ENCODE measurements at regions of chr5 and their contacts with region 1.

Region 1: DNA sequence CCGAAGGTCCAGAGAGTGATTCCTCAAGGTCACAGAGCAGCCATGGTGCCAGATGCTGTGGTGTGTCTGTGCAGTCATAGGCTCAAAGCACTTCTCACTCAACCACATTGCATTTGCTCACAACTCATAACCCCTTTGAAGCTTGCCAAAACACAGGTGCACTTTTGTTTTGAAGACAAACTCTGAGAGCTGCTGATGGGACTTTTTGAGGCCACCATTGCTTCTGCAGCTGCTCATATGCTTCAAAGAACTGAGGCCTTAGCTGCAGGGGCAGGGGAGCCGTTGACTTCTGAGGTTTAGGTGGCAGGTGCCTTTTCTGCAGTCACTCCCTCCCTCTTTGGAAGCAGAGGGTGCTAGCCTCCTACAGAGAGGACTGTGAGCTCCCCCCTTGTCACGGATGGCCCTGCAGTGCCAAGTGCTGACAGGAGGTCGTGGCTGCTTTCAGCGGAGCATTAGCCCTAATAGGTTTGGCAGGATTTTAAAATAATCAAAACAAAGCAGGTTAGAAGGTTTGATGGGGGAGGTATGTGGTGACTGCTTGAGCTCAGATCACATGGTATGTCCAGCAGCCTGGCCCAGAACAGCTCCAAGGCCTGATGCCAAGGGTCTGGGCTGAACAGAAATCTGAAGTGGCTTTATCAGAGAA is 232.1 kb downstream of the MAN2A1 start:
- DNase-seq: peak; percentile 38 to 91 (median 68)
- ATAC-seq: peak; percentile 89
- H3K4me3 ChIP-seq: peak overlapping the region; percentile 13
- H3K4me3 Mint-ChIP-seq: peak overlapping the region; percentile 79
- H3K27ac ChIP-seq: peak overlapping the region; percentile 60 to 73
- H3K27ac Mint-ChIP-seq: peak overlapping the region; percentile 94
- H3K4me1 ChIP-seq: peaks cover 36% of the 10 kb centered on the region
- H3K4me1 Mint-ChIP-seq: peaks cover 66% of the 10 kb centered on the region
- H3K27me3 ChIP-seq: no peaks in the 10 kb centered on the region
- H3K27me3 Mint-ChIP-seq: no peaks in the 10 kb centered on the region
- CTCF ChIP-seq: no peak

Region 2: GRCh38 chr5:109823597-109823996 is 98.3 kb before region 1 on chr5:
- CTCF ChIA-PET with region 1: no interaction called
- POLR2A ChIA-PET with region 1: interaction called, 10 read pairs
- intact Hi-C with region 1: no loop called
- DNase-seq: no peak
- ATAC-seq: no peak
- H3K4me3 ChIP-seq: no peak overlapping the region
- H3K4me3 Mint-ChIP-seq: no peak overlapping the region
- H3K27ac ChIP-seq: no peak overlapping the region
- H3K27ac Mint-ChIP-seq: no peak overlapping the region
- H3K4me1 ChIP-seq: no peaks in the 10 kb centered on the region
- H3K4me1 Mint-ChIP-seq: peaks cover 12% of the 10 kb centered on the region
- H3K27me3 ChIP-seq: no peaks in the 10 kb centered on the region
- H3K27me3 Mint-ChIP-seq: no peaks in the 10 kb centered on the region
- CTCF ChIP-seq: no peak

Region 3: GRCh38 chr5:109852371-109853155 is 69.3 kb before region 1 on chr5:
- CTCF ChIA-PET with region 1: interaction called, 5 read pairs
- POLR2A ChIA-PET with region 1: interaction called, 45 read pairs
- intact Hi-C with region 1: loop called in 1 of 2 experiments (anchors 5 kb)
- DNase-seq: peak in 2 of 14 experiments; percentile 27 to 38
- ATAC-seq: no peak
- H3K4me3 ChIP-seq: no peak overlapping the region
- H3K4me3 Mint-ChIP-seq: peak overlapping the region; percentile 39
- H3K27ac ChIP-seq: no peak overlapping the region
- H3K27ac Mint-ChIP-seq: peak overlapping the region; percentile 73
- H3K4me1 ChIP-seq: peaks cover 40% of the 10 kb centered on the region
- H3K4me1 Mint-ChIP-seq: peaks cover 82% of the 10 kb centered on the region
- H3K27me3 ChIP-seq: no peaks in the 10 kb centered on the region
- H3K27me3 Mint-ChIP-seq: no peaks in the 10 kb centered on the region
- CTCF ChIP-seq: no peak

Region 4: DNA sequence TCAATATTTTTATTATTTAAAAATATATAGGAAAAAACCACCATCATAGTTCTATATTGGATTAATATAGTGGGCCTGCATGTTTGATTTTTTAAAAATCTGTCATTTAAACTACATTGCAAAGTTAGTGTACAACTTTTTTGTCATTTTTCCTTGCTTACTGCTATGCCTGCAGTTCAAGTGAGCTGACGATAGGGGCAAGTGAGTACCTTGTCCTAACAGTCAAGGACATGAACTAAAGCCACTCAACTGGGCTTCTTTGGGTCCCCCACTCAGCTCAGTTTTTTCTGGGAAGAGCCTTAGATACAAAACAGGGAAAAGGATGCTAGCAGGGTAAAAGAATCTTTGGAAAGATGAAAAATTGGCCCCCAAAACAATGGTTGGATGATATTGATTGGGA is 37.8 kb after region 1 on chr5:
- CTCF ChIA-PET with region 1: no interaction called
- POLR2A ChIA-PET with region 1: no interaction called
- intact Hi-C with region 1: no loop called
- DNase-seq: no peak
- ATAC-seq: no peak
- H3K4me3 ChIP-seq: no peak overlapping the region
- H3K4me3 Mint-ChIP-seq: no peak overlapping the region
- H3K27ac ChIP-seq: no peak overlapping the region
- H3K27ac Mint-ChIP-seq: no peak overlapping the region
- H3K4me1 ChIP-seq: no peaks in the 10 kb centered on the region
- H3K4me1 Mint-ChIP-seq: peaks cover 28% of the 10 kb centered on the region
- H3K27me3 ChIP-seq: no peaks in the 10 kb centered on the region
- H3K27me3 Mint-ChIP-seq: no peaks in the 10 kb centered on the region
- CTCF ChIP-seq: no peak

Measured in CD4-positive, alpha-beta T cell (primary cell).